Heart right ventricle (tissue), 16 donors: ENCODE measurements at regions of chr3 and their contacts with region 1.

Region 1: GRCh38 chr3:149129326-149130205 is at the start of gene HPS3:
- DNase-seq: peak; percentile 89 to 92
- ATAC-seq: peak; percentile 98 to 99 (median 99)
- H3K4me3 ChIP-seq: peak within 1 kb of the TSS; percentile 42 to 99 (median 88)
- H3K27ac ChIP-seq: peak within 1 kb of the TSS; percentile 19 to 90 (median 84)
- H3K4me1 ChIP-seq: peaks cover 0 to 38% (median 30%) of the 10 kb centered on the region in 9 donors
- H3K27me3 ChIP-seq: no peaks in the 10 kb centered on the region
- CTCF ChIP-seq: peak in 4 of 9 donors; percentile 4 to 24 (median 21)
- total RNA-seq, gene HPS3: 3.9 to 12.8 (median 5.0) TPM

Region 2: GRCh38 chr3:148962513-148962912 is 167.1 kb before region 1 on chr3:
- intact Hi-C with region 1: loop called in 5 of 10 experiments (anchors 5 to 10 kb)
- DNase-seq: no peak
- ATAC-seq: peak in 2 of 8 donors; percentile 35 to 71
- H3K4me3 ChIP-seq: no peak overlapping the region
- H3K27ac ChIP-seq: no peak overlapping the region
- H3K4me1 ChIP-seq: peaks cover 0 to under 1% (median 0%) of the 10 kb centered on the region in 9 donors
- H3K27me3 ChIP-seq: no peaks in the 10 kb centered on the region
- CTCF ChIP-seq: peak in 2 of 9 donors; percentile 8 to 22

Region 3: GRCh38 chr3:149086232-149086988 is 43.2 kb before region 1 on chr3 and contains the start of gene HLTF:
- intact Hi-C with region 1: no loop called
- DNase-seq: peak; percentile 94 to 98
- ATAC-seq: peak; percentile 100
- H3K4me3 ChIP-seq: peak within 1 kb of the TSS; percentile 54 to 87 (median 74)
- H3K27ac ChIP-seq: peak within 1 kb of the TSS in 9 of 10 donors; percentile 54 to 78 (median 70)
- H3K4me1 ChIP-seq: peaks cover 0 to 18% (median 10%) of the 10 kb centered on the region in 9 donors
- H3K27me3 ChIP-seq: no peaks in the 10 kb centered on the region
- CTCF ChIP-seq: no peak
- total RNA-seq, gene HLTF: 19.1 to 38.6 (median 30.6) TPM

Region 4: DNA sequence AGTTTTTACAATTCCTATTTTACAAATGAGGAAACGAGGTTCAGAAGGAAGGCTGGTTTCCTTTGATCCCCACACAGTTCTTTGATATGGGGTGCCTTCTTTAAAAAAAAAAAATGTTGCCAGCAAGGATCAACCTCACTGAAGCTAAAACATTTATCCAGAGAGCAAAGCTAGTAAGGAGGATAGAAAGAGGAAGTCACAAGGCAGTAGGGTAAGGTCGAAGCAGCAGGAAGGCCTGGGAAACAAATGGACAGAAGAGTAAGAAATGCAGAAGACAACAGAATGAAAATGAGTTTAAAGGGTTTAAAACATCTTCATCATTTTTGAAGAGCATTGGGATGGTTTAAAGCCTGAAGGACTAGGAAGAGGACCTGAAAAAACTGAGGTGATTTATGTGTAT is 122.7 kb after region 1 on chr3:
- intact Hi-C with region 1: no loop called
- DNase-seq: no peak
- ATAC-seq: no peak
- H3K4me3 ChIP-seq: no peak overlapping the region
- H3K27ac ChIP-seq: no peak overlapping the region
- H3K4me1 ChIP-seq: peaks cover 0 to 13% (median 0%) of the 10 kb centered on the region in 9 donors
- H3K27me3 ChIP-seq: no peaks in the 10 kb centered on the region
- CTCF ChIP-seq: no peak

Region 5: DNA sequence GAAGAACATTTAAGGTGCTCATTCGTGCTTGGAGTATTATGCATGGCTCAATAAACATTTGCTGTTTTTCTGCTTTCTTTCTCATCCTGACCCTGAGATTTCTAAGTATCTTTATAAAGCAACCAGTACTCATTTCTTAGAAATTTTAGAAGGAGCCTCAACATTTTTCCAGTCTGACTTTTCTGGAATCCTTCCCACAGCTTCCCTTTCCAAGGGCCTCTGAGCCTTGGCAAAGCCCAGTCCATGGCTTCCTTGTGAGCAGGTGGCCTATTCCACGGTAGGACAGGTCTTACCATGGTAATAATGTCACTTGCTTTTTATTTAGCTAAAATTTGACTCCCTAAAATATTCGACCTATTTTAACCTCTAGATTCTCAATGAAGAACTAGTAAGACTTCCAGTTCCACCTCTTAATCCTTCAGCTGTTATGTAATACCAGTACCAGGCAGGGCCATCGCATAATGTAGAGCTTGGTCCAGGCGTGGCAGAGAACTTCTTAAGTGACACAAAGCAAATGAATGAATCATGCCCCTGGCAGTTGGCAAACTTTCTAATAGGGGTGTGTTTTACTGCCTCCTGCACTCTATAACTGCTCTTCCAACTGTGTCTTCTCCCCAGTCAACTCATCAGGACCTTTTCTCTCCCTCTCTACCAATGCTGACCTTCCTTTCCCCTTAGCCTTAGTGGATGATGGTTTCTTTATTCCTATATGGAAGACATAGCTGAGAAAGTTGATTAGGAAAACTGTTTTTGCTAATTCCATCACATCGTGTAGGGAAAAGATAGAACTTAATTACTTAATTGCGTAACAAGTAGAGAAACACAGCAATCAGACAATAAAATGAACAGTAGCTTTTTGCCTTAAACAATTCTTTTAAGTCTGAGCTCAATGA is 344.0 kb after region 1 on chr3:
- intact Hi-C with region 1: loop called in 1 of 10 experiments (anchors 10 kb)
- DNase-seq: no peak
- ATAC-seq: peak in 6 of 8 donors; percentile 29 to 71 (median 44)
- H3K4me3 ChIP-seq: no peak overlapping the region
- H3K27ac ChIP-seq: no peak overlapping the region
- H3K4me1 ChIP-seq: peaks cover 0 to 42% (median 9%) of the 10 kb centered on the region in 9 donors
- H3K27me3 ChIP-seq: no peaks in the 10 kb centered on the region
- CTCF ChIP-seq: no peak

Region 6: DNA sequence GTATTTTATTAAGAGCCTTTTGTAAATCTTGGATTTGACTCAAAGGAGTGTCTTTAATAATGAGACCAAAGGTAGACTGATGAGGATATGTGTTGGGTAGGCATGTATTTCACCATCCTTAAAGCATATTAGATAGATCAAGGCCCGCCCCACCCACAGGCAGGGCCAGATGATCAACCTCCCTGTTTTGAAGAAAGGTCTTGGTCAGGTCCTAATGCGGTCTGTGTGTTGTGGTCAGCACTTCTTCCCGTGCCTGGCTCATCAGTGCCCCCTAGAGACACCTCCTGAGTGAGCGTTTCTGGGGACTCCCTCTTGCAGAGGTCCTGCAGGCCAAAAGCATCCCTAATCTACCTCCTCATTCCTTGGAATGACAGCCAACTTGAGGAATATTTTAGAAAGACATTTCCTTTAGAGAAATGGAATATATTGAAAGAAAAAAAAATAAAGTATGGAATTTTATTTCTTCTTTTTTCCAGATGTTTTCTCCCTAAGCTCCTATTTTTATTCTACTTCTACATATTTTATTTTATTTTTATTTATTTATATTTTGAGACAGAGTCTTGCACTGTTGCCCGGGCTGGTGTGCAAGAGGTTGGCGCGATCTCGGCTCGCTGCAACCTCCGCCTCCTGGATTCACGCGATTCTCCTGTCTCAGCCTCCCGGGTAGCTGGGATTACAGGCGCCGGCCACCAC is 350.9 kb after region 1 on chr3:
- intact Hi-C with region 1: loop called in 4 of 10 experiments (anchors 10 kb)
- DNase-seq: peak; percentile 74 to 88
- ATAC-seq: peak; percentile 92 to 97 (median 96)
- H3K4me3 ChIP-seq: no peak overlapping the region
- H3K27ac ChIP-seq: peak overlapping the region; percentile 12 to 89 (median 74)
- H3K4me1 ChIP-seq: peaks cover 0 to 20% (median 14%) of the 10 kb centered on the region in 9 donors
- H3K27me3 ChIP-seq: no peaks in the 10 kb centered on the region
- CTCF ChIP-seq: peak; percentile 71 to 97 (median 86)

Region 7: DNA sequence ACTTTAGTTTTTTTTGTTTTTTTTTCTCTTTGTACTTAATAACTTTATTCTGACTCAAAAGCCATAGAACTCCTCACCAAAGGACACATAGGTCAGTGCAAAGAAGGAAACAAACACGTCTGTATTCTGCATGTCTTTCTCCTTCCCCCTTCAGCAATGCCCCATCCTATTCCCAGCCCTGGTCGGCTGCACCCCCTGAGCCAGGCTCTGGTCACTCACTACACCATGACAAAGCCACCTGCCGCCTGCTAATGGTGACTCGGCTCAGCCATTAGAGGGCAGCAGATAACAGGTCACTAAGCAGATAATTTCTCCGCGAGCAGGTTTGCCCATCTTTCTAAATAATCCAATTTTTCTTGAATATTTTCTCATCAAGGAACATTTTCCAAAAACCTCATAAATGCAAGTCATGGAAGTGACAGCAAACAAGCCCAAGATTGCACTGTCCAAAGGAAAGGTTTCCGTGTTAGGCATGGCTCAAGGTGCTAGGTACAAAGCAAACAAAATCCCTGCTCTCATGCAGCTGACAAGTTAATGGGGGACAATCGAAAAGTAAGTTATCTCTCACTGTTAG is 382.7 kb after region 1 on chr3:
- intact Hi-C with region 1: loop called in 1 of 10 experiments (anchors 10 kb)
- DNase-seq: peak; percentile 40 to 62
- ATAC-seq: peak; percentile 74 to 86 (median 80)
- H3K4me3 ChIP-seq: no peak overlapping the region
- H3K27ac ChIP-seq: no peak overlapping the region
- H3K4me1 ChIP-seq: peaks cover 0 to 29% (median 13%) of the 10 kb centered on the region in 9 donors
- H3K27me3 ChIP-seq: no peaks in the 10 kb centered on the region
- CTCF ChIP-seq: peak; percentile 71 to 91 (median 87)